Posterior vena cava (tissue), 2 donors: ENCODE measurements at regions of chr17 and their contacts with region 1.

Region 1: DNA sequence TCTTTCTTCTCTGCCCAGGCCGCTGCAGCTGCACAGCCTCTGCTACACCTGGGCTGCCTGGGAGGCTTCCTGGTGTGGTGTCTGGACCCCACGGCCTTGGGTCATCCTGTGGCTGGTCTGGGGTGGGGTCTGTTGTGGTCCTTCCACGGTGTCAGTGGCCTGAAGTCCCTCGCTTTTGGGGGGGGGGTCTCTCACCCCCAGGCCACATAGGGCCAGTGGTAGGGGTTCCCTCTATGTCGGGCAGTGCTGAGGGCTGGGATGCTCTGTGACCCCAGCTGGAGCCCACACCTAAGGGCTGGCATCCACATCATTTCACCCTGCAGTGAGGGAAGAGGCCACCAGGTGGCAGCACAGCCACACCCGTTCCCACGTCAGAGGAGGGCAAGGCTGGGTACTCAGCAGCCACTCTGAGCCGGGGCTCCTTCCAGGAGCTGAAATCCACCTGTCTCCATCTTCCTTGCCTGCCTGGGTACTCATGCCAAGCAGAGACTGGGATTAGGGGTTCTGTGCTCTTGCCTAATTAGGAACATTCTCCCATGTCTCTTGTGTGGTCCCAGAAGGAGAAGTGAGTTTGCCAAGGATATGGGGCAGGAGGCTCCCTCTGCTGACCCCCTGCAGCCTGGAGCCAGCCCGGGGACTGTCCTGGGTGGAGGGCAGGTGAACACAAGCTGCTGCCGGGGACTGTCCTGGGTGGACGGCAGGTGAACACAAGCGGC is 13.0 kb downstream of the ENGASE start:
- DNase-seq: peak; percentile 91

Region 2: DNA sequence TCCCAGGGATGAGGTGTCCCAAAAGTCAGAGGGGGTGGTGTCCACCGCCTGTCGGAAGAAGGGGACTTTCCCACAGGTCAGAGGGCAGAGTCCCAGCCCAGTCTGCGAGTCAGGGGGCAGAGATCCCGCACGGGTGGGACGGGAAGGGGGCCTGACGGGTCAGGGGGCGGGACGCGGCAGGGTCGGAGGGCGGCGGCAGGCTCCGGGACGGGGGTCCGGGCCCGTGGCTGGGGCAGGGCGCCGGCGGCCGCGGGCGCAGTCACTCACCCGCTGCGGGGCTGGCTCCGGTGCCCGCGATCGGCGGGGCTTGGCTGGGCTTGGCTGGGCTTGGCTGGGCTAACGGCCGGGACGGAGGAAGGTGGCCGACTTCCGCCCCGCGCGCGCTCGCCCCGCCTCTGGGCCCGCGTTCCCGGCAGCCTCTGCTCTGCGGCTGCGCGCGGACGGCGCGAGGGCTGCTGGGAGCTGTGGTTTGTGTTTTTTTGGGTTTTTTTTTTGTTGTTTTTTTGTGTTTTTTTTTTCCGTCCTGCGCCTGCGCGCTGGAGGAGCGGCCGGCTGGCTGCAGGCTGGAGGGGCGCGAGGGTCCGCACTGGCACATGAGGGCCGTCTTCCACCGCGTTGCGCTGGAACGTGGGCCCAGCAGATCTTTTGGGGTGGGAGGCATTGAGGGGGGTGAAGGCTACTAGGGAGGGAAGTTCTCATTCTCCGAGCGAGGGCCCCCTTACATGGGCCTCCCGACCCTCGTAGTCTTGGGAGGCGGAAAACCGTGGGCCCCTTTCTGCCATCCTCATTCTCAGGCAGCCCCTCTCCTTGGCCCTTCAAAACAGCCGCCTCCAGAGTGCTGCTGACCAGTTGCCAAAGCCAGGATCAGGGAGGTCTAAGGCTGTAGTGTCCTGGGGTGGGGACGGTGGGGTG is 77.9 kb before region 1 on chr17 and contains the start of gene CANT1:
- intact Hi-C with region 1: loop called in 1 of 2 experiments (anchors 10 kb)
- DNase-seq: peak; percentile 96
- total RNA-seq, gene CANT1: 29.5 to 34.7 TPM

Region 3: GRCh38 chr17:79201536-79202227 is 114.1 kb after region 1 on chr17:
- intact Hi-C with region 1: no loop called
- DNase-seq: no peak